AG04450 (cell line): ENCODE measurements at regions of chr7 and their contacts with region 1.

Region 1: DNA sequence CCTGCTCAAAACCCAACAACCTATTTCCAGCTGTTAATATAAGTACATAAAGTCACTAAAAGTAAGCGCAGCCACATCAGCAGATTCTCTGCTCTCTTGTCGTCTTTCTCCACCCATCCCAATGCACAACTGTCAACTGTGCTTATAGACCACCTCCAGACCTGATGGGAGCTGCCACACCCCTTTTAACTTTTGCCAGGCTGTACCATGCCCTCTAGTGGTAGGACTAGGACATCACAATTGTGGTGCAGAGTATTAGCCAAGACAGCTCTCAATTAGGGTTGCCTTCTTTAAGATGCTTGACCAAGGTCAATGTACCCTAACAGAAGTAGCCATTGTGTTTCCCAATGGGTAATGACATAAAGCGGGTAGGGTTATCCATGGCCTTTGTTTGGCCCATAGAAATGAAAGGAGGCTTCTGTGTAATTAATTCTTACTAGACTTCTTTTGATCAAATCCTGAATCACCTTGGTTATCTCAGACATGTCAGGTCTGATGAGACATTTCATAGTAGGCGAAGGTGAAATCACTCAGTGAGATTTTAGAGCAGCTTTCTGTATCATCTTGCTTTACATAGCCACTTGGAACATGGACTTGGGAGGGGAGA is 68.1 kb downstream of the SCRN1 start:
- DNase-seq: peak; percentile 30
- H3K4me3 ChIP-seq: no peak overlapping the region
- H3K27ac ChIP-seq: no peak overlapping the region
- H3K27me3 ChIP-seq: no peaks in the 10 kb centered on the region
- CTCF ChIP-seq: peak; percentile 94

Region 2: GRCh38 chr7:29748286-29749108 is 173.0 kb before region 1 on chr7:
- CTCF ChIA-PET with region 1: interaction called, 31 read pairs
- POLR2A ChIA-PET with region 1: no interaction called
- DNase-seq: peak; percentile 4
- H3K4me3 ChIP-seq: no peak overlapping the region
- H3K27ac ChIP-seq: no peak overlapping the region
- H3K27me3 ChIP-seq: peaks cover 4% of the 10 kb centered on the region
- CTCF ChIP-seq: peak; percentile 65

Region 3: GRCh38 chr7:29906200-29907022 is 15.1 kb before region 1 on chr7:
- CTCF ChIA-PET with region 1: interaction called, 30 read pairs
- POLR2A ChIA-PET with region 1: no interaction called
- DNase-seq: no peak
- H3K4me3 ChIP-seq: no peak overlapping the region
- H3K27ac ChIP-seq: no peak overlapping the region
- H3K27me3 ChIP-seq: no peaks in the 10 kb centered on the region
- CTCF ChIP-seq: no peak

Region 4: DNA sequence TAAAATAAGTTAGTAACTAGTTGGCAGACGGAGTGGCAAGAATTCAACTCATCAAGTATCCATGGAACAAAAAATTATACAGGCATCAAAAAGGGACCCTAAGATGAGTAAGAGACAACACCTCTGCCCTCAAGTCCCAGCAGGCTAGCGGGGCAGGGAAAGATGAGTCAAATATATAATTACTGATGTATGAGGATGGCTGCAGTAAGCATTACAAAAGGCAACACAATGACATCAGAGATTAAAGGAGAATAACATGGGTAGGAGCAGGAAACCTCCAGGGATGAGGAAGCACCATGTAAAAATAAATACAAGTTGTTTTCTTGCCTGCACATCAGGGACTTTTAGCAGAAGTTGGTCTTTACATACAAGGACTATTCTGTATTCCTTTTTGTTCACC is 18.7 kb after region 1 on chr7:
- CTCF ChIA-PET with region 1: interaction called, 11 read pairs
- POLR2A ChIA-PET with region 1: no interaction called
- DNase-seq: no peak
- H3K4me3 ChIP-seq: no peak overlapping the region
- H3K27ac ChIP-seq: no peak overlapping the region
- H3K27me3 ChIP-seq: no peaks in the 10 kb centered on the region
- CTCF ChIP-seq: no peak

Region 5: GRCh38 chr7:30001998-30002397 is 80.5 kb after region 1 on chr7:
- CTCF ChIA-PET with region 1: no interaction called
- POLR2A ChIA-PET with region 1: no interaction called
- DNase-seq: no peak
- H3K4me3 ChIP-seq: no peak overlapping the region
- H3K27ac ChIP-seq: no peak overlapping the region
- H3K27me3 ChIP-seq: no peaks in the 10 kb centered on the region
- CTCF ChIP-seq: no peak

Region 6: GRCh38 chr7:30938435-30939316 is 1017.2 kb after region 1 on chr7:
- CTCF ChIA-PET with region 1: no interaction called
- POLR2A ChIA-PET with region 1: no interaction called
- DNase-seq: peak; percentile 32
- H3K4me3 ChIP-seq: no peak overlapping the region; the same call in 1 of the 2 replicates
- H3K27ac ChIP-seq: no peak overlapping the region
- H3K27me3 ChIP-seq: peaks cover 25% of the 10 kb centered on the region
- CTCF ChIP-seq: peak; percentile 97